ENCODE measurements at regions of chr9 and their contacts with region 1.

Region 1: DNA sequence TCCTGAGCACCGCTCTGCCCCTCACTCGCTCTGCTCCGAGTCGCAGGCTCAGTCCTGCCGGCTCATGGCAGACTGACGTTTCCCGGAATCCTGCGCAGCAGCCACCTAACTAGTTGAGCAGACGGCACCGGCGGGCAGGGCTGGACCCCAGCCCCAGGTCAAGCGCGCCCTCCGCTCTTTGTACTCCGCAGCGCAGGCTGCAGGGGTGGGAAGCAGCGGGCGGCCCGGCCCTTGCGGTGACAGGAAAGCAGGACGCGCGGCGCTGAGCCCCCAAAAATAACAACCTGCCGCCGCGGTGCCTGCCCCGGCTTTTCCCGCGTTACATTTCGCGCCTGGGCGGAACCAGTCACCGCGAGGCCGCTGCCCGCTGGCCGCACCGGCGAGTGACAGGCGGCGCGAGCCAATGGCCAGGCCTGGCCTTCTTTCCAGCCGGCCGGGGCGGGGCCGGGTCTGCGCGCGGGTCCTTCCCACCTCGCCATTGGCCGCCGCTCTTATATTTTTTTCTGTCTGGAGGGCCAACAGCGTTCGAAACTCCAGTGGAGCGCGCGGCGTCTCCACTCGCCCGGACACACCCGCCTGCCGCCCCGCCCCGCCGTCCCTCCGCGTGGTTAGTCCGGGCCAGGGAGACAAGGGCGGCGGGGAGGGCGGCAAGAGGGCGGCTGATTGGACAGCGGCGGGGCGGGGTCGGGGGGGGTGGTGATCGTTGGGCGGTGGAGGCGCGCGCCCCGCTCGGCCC is at the start of gene ZNF367:
- DNase-seq: peak; percentile 93 to 98 (median 96)
- H3K4me3 ChIP-seq: peak within 1 kb of the TSS; percentile 66 to 100 (median 89)
- H3K27ac ChIP-seq: peak within 1 kb of the TSS; percentile 94 to 100 (median 99)
- H3K27me3 ChIP-seq: no peaks in the 10 kb centered on the region
- CTCF ChIP-seq: peak in 10 of 56 donors; percentile 5 to 36 (median 16)
- total RNA-seq, gene ZNF367: 0.69 to 9.8 (median 1.8) TPM

Region 2: DNA sequence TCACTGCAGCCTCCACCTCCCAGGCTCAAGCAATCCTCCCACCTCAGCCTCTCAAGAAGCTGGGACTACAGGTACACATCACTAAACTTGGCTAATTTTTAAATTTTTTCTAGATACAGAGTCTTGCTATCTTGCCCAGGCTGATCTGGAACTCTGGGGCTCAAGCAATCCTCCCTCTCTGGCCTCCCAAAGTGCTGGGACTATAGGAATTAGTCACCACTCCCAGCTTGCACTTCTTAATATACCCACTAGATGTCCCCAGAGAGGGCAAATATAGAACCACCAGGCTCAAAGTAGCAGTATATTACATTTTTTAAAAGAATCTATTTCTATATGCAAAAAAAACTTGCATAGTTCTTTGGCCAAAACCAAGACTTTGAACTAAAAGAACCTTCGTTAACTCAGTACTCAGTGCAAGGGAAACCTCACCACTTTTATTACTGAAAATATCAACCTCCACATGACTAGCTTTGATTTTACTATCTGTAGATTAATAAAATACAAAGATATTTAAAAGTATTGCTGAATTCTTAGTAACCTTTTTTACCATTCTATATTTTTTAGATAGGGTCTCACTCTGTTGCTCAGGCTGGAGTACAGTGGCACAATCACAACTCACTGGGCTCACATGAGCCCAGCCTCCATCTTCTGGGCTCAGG is 90.4 kb before region 1 on chr9:
- intact Hi-C with region 1: loop called (anchors 5 kb)
- DNase-seq: peak in 3 of 10 donors; percentile 17 to 49 (median 42)
- H3K4me3 ChIP-seq: peak overlapping the region in 1 of 59 donors; percentile 13
- H3K27ac ChIP-seq: peak overlapping the region in 33 of 59 donors; percentile 1 to 70 (median 40)
- H3K27me3 ChIP-seq: no peaks in the 10 kb centered on the region
- CTCF ChIP-seq: peak; percentile 73 to 97 (median 90)

Region 3: DNA sequence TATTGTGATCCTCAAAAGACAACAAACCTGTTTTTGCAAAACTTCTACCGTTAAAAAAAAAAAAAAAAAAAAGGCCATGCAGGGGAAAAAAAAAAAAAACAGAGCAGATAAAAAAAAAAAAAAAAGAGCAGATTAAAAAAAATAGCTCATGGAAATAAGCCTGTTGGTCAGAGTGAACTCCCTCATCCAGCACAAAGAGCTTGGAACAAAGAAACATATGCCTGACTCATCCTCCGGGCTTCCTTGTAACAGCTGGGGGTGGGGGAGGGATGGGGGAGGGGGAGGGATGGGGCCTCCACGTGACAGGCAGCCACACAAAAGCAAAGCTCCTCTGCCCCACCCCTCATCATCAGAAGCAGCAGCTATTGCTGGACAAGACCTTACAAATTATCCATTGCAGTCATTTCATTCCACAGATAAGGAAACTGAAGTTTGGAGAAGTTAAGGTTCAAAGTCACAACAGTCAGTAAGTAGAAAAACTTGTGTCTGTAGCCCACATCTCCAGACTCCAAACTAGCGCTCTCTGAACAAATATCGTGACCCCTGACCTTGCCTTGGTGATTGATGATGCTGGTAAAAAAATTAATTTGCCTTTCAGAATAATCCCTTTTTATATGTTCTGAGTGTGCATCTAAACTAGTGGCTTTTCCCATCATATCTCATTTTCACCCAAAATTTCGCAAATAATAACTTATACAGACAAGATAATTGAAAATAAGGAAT is 73.6 kb before region 1 on chr9:
- intact Hi-C with region 1: loop called (anchors 2 to 5 kb)
- DNase-seq: peak in 7 of 10 donors; percentile 41 to 68 (median 59)
- H3K4me3 ChIP-seq: peak overlapping the region in 2 of 59 donors; percentile 4 to 6
- H3K27ac ChIP-seq: peak overlapping the region in 58 of 59 donors; percentile 30 to 97 (median 85)
- H3K27me3 ChIP-seq: no peaks in the 10 kb centered on the region
- CTCF ChIP-seq: peak in 2 of 56 donors; percentile 5 to 11

Region 4: GRCh38 chr9:96383165-96383942 is 34.9 kb before region 1 on chr9 and contains the start of gene SLC35D2:
- intact Hi-C with region 1: loop called in 1 of 2 experiments (anchors 5 kb)
- DNase-seq: peak in 6 of 10 donors; percentile 22 to 72 (median 39)
- H3K4me3 ChIP-seq: peak within 1 kb of the TSS; percentile 49 to 84 (median 72)
- H3K27ac ChIP-seq: peak within 1 kb of the TSS; percentile 49 to 95 (median 88)
- H3K27me3 ChIP-seq: no peaks in the 10 kb centered on the region
- CTCF ChIP-seq: peak in 3 of 56 donors; percentile 9 to 17 (median 13)
- total RNA-seq, gene SLC35D2: 5.6 to 99.0 (median 18.4) TPM

Region 5: DNA sequence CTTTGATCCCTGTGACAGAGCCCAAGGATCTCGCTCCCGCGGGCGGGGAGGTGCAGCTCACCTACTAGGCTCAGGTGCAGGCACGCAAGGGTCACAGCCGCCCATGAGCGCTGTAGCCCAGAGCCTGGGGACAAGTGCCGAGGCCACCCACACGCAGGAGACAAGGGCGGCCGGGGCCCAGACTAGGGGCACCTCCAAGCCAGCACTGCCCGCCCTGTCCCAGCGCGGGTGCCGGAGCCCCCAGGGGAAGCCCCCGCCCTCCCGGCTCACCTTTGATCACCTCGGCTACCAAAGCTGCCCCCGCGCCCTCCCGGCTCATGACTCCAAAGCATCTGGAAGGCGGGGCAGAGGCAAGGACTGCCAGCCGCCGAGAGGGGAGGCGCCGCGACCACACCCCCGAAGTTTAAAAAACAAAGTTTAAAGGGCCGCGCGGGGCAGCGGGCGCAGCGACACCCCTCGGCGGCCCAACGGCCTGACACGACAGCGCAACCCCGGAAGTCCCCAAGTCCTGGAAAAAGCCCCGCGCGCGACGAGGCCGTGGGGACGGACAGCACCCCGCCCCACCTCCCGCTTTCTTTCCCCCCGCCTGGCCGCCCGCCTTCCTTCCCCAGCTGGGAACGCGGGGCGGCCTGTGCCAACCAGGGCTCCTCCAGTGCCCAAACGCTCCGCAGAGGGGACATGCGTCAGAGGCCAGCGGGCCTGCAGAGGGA is 148.4 kb after region 1 on chr9:
- intact Hi-C with region 1: loop called in 1 of 2 experiments (anchors 10 kb)
- DNase-seq: peak; percentile 38 to 86 (median 76)
- H3K4me3 ChIP-seq: peak overlapping the region; percentile 53 to 92 (median 78)
- H3K27ac ChIP-seq: peak overlapping the region; percentile 73 to 99 (median 97)
- H3K27me3 ChIP-seq: no peaks in the 10 kb centered on the region
- CTCF ChIP-seq: peak; percentile 40 to 87 (median 72)

Region 6: DNA sequence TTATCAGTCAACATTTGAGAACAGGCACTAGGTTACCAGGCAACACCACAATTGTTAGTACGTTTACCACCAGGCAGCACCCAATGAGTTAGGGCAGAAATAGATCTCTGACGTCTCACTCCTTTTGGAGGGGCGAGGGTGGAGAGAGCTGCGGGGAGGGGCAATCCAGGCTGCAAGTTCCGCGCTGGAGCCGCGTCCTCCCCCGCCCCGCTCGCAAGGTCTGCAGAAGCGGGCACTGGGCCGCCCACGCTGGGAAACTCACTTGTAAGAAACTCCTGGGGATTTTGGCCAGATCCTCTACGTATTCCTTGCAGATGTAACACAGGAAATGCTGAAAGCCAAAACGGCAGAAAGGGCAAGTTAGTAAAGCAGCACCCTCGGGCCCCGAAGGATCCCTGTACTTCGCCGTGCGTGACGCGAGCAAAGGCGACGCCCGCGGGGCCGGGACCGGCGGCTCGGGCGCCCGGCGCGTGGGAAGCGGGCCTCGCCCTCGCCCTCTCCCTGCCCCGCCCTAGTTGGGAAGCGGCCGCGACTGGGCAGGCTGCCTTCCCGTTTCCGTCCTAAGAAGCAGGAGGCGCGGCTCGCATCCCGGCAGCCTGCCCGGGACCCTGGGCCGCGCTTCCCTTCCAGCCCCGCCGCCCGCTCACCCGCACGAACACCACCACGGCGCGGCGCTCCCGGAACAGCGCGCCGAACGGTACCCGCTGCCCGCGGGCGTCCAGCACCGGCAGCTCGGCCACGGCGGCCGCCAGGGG is 236.4 kb after region 1 on chr9:
- intact Hi-C with region 1: loop called (anchors 1 to 10 kb)
- DNase-seq: peak; percentile 46 to 85 (median 73)
- H3K4me3 ChIP-seq: peak overlapping the region; percentile 45 to 81 (median 70)
- H3K27ac ChIP-seq: peak overlapping the region; percentile 71 to 98 (median 93)
- H3K27me3 ChIP-seq: no peaks in the 10 kb centered on the region
- CTCF ChIP-seq: peak in 24 of 56 donors; percentile 8 to 52 (median 22)

Measured in dorsolateral prefrontal cortex (tissue), 120 donors.